Left ventricle myocardium inferior (tissue), 1 donor: ENCODE measurements at regions of chr2 and their contacts with region 1.

Region 1: DNA sequence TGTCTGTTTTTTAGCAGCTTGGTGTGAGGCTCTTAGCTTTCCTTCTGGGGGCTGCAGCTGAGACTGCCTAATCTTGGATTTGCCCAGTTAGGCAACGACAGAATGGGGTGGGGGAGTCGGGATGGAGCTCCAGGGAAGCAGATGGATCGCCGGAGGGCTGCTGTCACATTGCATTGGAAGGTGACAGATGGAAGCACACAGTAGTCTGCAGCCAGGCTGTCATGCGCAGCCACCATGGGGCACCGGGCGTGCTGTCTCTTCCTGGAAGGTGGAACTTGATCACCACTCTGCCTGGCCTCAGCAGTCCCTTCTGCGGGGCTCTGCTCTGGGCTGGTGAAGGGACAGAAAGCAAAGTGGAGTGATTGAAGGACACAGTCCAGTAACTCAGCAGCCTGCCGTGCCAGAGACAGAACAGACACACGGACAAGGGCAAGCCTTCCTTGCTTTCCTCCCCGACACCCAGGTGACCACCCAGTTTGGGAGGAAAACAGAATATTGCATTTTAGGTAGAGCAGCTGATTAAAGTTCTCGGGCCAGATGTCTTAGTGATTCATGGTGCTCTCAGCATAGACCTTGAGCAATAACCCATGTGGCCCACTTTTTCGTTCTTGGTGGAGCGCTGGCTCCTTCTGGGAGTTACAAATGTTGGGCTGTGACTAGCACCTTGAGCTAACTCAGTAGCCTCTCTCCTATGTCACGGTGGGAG is 40.9 kb downstream of the RNF144A start:
- DNase-seq: no peak
- H3K4me3 ChIP-seq: no peak overlapping the region
- H3K27ac ChIP-seq: peak overlapping the region; percentile 45
- H3K4me1 ChIP-seq: peaks cover 74% of the 10 kb centered on the region
- H3K27me3 ChIP-seq: no peaks in the 10 kb centered on the region
- CTCF ChIP-seq: no peak

Region 2: DNA sequence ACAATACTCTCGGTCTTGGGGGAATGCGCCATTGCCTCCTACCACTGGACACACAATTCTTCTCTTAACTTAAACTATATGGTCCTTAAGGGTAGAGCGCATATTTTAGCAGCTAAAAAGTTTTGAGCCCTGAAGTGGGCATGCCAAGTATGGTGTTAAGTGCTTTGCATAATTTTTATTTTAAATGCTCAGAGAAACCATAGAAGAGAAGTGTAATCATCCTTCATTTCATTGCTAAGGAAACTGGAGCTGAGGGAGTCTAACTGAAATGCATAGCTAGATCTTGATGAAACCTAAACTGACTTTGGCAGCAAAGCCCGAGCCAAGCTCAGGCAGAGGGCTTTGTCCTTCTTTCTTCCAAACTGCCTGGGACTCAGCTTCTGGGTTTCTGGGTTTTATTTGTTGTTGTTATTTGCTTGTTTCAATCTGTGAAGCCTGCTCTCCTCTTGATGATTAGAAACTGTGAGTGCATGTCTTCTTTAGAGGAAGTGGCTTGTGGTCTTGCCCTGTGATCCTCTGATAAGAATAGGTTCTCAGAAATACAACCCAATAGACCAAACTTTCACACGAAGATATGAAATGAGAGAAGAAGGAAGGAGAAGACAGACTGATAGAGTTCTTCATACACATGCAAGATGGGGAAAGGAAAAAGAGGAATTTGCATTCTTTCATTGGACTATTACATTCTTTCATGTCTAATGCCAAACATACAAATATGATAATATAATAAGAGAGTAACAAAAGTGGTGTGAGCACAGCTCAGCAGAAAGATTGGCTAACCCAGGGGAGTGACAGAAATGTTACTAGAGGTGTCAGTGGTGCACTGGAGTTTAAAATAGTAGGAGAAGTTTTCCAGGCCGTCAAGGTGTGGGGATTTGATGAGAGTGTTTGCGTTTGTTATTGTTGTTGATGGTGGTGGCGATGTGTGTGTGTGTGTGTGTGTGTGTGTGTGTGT is 48.4 kb before region 1 on chr2:
- intact Hi-C with region 1: loop called (anchors 10 kb)
- DNase-seq: no peak
- H3K4me3 ChIP-seq: no peak overlapping the region
- H3K27ac ChIP-seq: no peak overlapping the region
- H3K4me1 ChIP-seq: no peaks in the 10 kb centered on the region
- H3K27me3 ChIP-seq: no peaks in the 10 kb centered on the region
- CTCF ChIP-seq: no peak